Activated naive CD4-positive, alpha-beta T cell treated with anti-CD3 and anti-CD28 coated beads for 36 hours (primary cell): ENCODE measurements at regions of chr12 and their contacts with region 1.

Region 1: DNA sequence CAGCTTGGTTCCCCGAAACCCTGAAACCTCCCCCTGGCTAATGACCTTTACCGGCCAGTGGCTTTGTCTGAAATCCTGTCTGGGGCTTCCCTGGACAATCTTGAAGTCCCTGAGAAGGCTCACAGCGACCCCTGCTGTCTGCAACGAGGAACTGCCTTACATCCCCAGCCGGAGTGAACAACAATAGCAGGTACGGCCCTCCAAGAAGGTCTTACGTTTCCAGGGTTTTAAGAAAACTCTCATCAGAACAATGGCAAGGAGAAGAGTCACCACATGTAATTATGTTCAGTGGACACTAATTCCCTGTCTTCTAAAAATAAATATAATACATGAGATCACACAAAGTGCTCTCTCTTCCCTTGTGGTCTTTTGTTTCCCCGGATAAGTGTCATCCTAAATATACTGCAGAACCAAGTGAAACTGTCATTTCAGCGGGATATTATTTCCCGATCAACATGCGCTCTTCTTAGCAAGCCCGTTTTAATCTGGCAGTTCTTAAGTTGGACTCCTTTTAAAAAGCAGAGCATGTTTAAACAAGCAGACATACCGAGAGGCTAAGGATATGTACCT is 53.3 kb downstream of the RBM19 start:
- DNase-seq: peak; percentile 67
- H3K4me3 Mint-ChIP-seq: no peak overlapping the region
- H3K27ac Mint-ChIP-seq: no peak overlapping the region
- H3K4me1 Mint-ChIP-seq: no peaks in the 10 kb centered on the region
- H3K27me3 Mint-ChIP-seq: no peaks in the 10 kb centered on the region

Region 2: GRCh38 chr12:113422030-113422885 is 490.6 kb before region 1 on chr12 and contains the start of gene SDSL:
- CTCF ChIA-PET with region 1: no interaction called
- intact Hi-C with region 1: no loop called
- DNase-seq: peak; percentile 66
- H3K4me3 Mint-ChIP-seq: no peak within 1 kb of the TSS
- H3K27ac Mint-ChIP-seq: no peak within 1 kb of the TSS
- H3K4me1 Mint-ChIP-seq: peaks cover 10% of the 10 kb centered on the region
- H3K27me3 Mint-ChIP-seq: peaks cover 3% of the 10 kb centered on the region
- total RNA-seq, gene SDSL: not detected

Region 3: GRCh38 chr12:113439606-113440030 is 473.2 kb before region 1 on chr12:
- CTCF ChIA-PET with region 1: no interaction called
- intact Hi-C with region 1: loop called (anchors 5 kb)
- DNase-seq: peak; percentile 28
- H3K4me3 Mint-ChIP-seq: no peak overlapping the region
- H3K27ac Mint-ChIP-seq: no peak overlapping the region
- H3K4me1 Mint-ChIP-seq: no peaks in the 10 kb centered on the region
- H3K27me3 Mint-ChIP-seq: peaks cover 3% of the 10 kb centered on the region

Region 4: GRCh38 chr12:113462117-113462774 is 450.6 kb before region 1 on chr12:
- CTCF ChIA-PET with region 1: no interaction called
- intact Hi-C with region 1: loop called (anchors 1 kb)
- DNase-seq: peak; percentile 85
- H3K4me3 Mint-ChIP-seq: peak overlapping the region; percentile 68
- H3K27ac Mint-ChIP-seq: no peak overlapping the region
- H3K4me1 Mint-ChIP-seq: peaks cover 23% of the 10 kb centered on the region
- H3K27me3 Mint-ChIP-seq: peaks cover 50% of the 10 kb centered on the region

Region 5: GRCh38 chr12:113658006-113658655 is 254.7 kb before region 1 on chr12:
- CTCF ChIA-PET with region 1: no interaction called
- intact Hi-C with region 1: loop called (anchors 10 kb)
- DNase-seq: no peak
- H3K4me3 Mint-ChIP-seq: no peak overlapping the region
- H3K27ac Mint-ChIP-seq: no peak overlapping the region
- H3K4me1 Mint-ChIP-seq: no peaks in the 10 kb centered on the region
- H3K27me3 Mint-ChIP-seq: no peaks in the 10 kb centered on the region